ENCODE measurements at regions of chr22 and their contacts with region 1.

Region 1: DNA sequence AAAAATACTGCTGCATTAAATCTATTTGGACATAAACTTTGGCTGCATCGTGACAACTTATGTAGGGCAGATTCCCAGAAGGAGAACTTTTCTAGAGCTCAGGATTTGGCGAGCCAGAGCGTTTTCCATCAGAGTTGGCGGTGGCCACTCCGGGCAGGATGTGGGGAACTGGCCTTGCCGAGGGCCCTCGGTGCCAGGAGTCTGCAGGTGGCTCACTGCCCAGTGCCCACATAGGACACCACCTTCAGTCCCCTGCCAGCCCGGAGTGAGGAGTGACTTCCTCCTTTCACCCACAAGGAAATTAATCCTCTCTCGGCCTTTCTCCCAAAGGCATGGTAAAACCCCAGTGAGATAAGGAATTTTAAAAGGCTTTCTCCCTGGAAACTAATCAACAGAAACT is 1.6 kb upstream of the LGALS2 start:
- DNase-seq: no peak
- H3K4me3 ChIP-seq: no peak overlapping the region
- CTCF ChIP-seq: no peak
- POLR2A ChIP-seq: no peak

Region 2: DNA sequence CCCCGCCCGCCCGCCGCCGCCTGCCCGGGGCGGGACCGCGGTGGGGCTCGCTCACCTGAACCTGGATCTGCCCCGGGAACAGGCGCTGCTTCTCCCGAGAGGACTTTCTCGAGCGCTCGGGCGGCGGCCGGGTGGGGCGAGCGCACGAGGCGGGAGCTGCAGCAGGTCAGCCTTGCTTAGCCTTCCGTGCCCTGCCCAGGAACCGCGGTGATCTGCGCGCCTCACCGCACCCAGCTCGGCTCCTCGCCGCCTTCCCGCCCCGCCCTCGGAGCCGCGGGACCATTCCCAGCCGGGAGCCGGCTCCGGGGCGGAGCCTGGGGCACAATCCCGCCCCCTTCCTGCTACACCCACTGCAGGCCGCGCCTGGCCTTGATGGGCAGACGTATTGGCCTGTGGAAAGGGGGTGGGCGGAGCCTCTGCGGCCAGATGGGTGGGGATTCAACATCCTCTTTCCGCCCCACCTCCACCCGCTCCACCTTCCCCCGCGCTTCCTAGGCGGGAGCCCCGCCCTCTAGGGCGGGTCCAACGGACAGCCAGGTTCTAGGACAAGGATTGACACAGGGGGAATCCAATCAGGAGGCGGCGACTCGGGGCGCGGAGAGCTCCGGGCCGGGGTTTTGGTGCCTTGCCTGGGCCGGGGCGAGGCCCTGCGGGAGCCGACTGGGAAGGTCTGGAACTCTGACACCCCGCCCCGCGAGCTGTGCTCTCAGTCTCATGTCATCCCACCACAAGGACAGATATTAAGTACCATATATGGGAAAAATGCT is 1193.6 kb before region 1 on chr22 and contains the start of gene MYH9:
- intact Hi-C with region 1: no loop called
- DNase-seq: peak; percentile 99 to 100
- H3K4me3 ChIP-seq: peak within 1 kb of the TSS; percentile 93
- CTCF ChIP-seq: no peak
- POLR2A ChIP-seq: peak in 1 of 2 donors; percentile 67
- total RNA-seq, gene MYH9: 258 to 335 (median 307) TPM

Region 3: DNA sequence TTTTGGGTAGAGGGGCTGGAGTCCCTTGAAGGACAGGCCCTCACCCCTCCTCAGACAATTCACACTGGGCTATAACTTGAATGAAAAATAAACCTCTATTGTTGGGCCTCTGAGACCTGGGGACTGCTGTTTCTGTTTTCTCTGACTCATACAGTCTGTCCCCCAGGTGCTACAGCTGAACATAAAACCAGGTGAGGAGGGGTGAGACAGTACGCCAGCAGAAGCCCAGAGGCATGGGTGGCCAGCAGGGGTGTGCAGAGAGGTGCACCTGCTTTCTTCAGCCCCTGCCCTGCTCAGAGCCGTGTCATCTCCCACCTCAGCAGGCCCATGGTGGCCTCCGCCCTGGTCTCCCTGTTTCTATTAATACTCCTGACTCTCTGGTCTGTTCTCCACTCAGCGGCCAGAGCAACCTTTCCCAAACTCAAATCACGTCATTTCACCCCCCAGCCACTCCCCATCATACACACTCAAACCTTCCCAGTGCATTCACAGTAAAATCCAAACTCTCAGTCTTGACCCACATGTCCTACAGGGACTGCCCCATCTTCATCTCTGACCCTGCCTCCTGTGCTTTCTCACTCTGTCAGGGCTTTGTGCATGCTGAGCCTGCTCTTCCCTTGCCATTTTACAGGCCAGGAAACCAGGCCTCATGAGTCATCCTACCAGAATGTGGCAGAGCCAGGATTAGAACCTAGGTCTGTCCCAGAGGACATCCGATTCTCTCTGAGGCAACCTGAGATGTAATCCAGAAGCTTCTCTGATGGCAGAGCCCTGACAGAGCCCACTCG is 426.4 kb before region 1 on chr22:
- intact Hi-C with region 1: loop called (anchors 5 kb)
- DNase-seq: no peak
- H3K4me3 ChIP-seq: no peak overlapping the region
- CTCF ChIP-seq: no peak
- POLR2A ChIP-seq: no peak

Region 4: GRCh38 chr22:37176218-37177091 is 405.0 kb before region 1 on chr22:
- intact Hi-C with region 1: no loop called
- DNase-seq: peak; percentile 69 to 90
- H3K4me3 ChIP-seq: no peak overlapping the region
- CTCF ChIP-seq: no peak
- POLR2A ChIP-seq: no peak

Region 5: DNA sequence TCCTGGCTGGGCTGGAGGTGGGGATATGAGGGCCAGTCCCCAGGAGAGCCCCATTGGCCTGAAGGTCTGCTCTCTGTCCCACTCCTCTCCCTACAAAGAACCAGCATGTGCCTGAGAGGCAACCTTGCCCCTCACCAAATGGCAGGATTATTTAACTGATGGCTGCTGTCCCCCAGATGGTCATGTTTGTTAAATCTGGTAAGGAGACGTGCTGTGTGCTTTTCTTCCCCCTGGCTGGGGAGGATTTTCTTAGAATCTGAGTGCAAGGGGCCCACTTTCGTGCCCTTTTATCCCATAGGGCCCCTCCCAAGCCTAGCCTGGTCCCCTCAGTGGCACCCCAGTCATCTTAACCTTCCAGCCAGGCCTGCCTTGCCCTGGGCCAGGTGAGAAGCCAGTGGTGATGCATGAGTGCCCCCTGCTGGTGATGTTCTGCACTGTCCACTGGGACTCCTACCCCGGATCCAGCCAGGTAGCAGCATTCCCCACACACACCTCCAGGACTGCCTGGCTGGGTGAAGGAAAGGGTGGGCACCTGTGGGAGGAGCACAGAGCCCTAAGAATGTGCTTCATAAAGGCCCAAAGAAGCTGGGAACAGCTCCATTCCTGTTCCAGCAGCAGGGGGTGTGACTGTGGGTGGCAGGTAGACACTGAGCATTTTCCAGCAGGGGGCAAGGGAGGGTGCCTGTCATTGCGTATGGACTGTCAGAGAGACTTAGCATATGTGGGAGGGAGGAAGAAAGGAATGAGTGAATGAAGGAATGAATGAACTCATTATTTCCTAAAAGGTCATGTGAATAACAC is 124.2 kb before region 1 on chr22:
- intact Hi-C with region 1: no loop called
- DNase-seq: peak; percentile 41 to 92
- H3K4me3 ChIP-seq: no peak overlapping the region
- CTCF ChIP-seq: peak in 1 of 3 donors; percentile 42
- POLR2A ChIP-seq: no peak

Region 6: DNA sequence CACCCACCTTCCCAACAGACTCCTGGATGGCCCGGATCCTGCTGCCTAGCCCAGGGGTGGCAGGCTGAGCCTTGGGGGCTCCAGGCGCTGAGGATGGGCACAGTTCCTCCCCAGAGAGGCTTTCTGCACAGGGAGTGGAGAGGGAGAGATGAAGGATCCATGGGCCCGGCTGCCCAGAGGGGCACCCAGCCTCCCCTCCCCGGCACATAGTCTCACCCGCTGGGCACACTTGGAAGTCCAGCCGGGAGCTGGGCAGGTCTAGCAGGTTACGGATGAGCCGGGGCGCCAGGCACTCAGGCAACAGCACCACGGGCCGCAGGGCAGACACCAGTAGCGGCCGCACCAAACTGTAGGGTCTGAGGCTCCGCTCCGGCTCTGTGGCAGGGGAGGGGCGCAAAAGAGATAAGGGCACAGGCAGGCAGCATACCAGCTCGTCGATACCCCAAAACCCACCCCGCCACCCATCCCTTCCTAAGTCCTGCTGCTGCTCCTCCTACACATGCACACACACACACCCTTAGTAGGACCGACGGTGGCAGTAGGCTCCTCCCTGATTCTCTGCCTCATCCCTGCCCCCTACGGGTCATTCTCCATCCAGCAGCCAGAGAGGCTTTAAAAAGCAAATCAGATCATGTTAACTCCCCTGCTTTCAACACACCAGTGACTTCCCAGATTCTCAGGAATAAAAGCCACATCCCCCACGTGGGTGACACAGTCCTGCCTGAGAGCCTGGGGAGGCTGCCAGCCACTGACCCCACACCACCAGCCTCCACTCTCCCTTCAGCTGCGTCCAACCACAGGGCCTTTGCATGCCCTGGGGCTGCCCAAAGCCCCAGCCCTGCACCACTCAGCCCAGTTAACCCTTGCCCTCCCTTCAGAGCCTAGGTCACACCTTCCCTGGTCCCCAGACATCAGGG is 88.8 kb before region 1 on chr22:
- intact Hi-C with region 1: no loop called
- DNase-seq: no peak
- H3K4me3 ChIP-seq: no peak overlapping the region
- CTCF ChIP-seq: no peak
- POLR2A ChIP-seq: no peak

Region 7: DNA sequence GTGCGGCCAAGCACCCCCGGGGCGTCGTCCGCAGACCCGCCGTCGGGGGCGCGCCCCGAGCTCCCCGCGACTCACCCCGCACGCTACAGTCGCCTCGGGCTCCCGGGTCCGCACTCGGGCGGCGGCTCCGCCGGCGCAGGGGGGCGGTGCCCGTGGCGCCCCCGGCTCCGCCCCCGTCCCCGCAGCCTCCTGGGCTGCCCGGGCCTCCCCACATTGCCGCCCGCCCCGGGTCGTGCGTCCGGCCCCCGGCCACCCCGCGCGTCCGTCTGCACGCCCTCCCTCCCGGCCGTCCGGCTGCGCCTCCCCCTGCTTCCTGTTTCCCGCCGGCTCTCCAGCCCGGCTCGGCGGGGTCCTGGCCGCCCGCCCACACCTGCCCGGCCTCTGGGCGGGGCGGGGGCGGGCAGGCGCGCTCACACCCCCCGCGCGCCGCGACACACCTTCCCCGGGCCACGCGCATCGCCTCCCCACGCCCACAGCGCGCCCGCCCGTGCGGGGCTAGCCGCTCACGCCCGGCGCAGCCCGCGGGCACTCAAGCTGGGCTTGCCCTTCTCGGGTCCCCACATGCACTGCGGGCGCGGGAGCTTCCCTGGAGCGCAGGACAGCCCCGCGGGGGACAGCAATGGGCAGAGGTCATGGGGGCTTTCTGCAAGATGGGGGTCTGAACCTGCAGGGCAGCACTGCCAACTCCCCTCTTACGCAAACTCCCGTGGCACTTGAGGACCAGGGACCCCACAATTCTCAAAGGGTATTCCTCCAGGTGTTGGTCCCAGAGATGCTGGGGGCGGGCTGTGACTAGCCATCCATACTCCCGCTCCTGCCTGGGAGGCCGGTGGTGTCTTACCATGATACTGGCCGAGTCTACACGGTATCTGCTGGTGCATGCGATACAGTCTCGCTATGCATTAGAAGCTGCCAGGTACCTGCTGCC is 62.0 kb before region 1 on chr22 and contains the start of gene CARD10:
- intact Hi-C with region 1: loop called (anchors 10 kb)
- DNase-seq: no peak
- H3K4me3 ChIP-seq: peak within 1 kb of the TSS; percentile 43
- CTCF ChIP-seq: no peak
- POLR2A ChIP-seq: no peak
- total RNA-seq, gene CARD10: 13.2 to 22.5 (median 18.6) TPM